HepG2 (cell line): ENCODE measurements at regions of chr12 and their contacts with region 1.

Region 1: GRCh38 chr12:69739287-69740191 is 879 bp downstream of the RAB3IP start:
- DNase-seq: peak; percentile 77
- ATAC-seq: peak; percentile 83
- H3K4me3 ChIP-seq: peak overlapping the region; percentile 74 to 86 (median 83)
- H3K27ac ChIP-seq: peak overlapping the region; percentile 89
- H3K4me1 ChIP-seq: peaks cover 18% of the 10 kb centered on the region
- H3K27me3 ChIP-seq: peaks cover 0 to 6% of the 10 kb centered on the region in 2 experiments; a peak in 2 of 5 replicates
- CTCF ChIP-seq: no peak
- EP300 ChIP-seq: no peak; a peak in 1 of 4 replicates
- POLR2A ChIP-seq: peak in 1 of 2 experiments; percentile 45; a peak in 1 of 4 replicates
- RAD21 ChIP-seq: no peak

Region 2: DNA sequence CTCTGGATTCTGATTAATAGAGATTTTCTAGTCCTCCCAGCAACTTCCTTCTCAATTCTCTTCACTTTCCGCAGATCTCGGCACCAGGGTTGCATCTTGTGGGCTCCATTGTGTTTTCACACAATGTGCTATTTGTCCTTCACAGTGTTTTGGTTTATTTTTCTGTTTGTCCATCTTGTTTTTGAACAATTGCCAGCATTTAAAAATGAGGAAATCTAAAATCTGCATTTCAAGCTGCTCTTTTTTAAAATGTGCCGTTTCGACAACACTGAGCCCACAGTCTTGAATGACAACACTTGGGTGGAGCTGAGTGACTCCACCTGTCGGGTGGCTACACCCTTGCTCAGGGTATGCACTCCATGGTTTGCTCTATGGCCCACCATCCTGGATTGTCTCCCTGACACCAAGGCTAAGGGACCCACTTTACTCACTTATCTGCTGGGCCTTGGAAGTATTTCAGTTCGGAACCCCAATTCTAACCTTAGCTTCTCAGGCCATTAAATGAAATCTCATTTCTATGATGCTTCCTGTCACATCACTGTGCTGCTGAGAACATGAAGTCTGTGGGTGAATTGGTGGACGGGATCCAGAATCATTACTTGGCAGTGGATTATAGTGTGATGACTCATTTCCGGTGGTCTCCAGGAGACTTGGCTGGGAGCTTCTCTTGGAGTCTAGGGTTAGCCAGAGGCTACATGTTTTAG is 82.1 kb after region 1 on chr12:
- CTCF ChIA-PET with region 1: no interaction called
- POLR2A ChIA-PET with region 1: no interaction called
- in situ Hi-C with region 1: no loop called
- intact Hi-C with region 1: loop called (anchors 10 kb)
- DNase-seq: no peak
- ATAC-seq: peak; percentile 43
- H3K4me3 ChIP-seq: no peak overlapping the region
- H3K27ac ChIP-seq: no peak overlapping the region
- H3K4me1 ChIP-seq: no peaks in the 10 kb centered on the region
- H3K27me3 ChIP-seq: no peaks in the 10 kb centered on the region
- CTCF ChIP-seq: no peak
- EP300 ChIP-seq: no peak
- POLR2A ChIP-seq: no peak
- RAD21 ChIP-seq: no peak